Activated CD4-positive, alpha-beta T cell treated with anti-CD3 and anti-CD28 coated beads for 36 hours (primary cell): ENCODE measurements at regions of chr6 and their contacts with region 1.

Region 1: DNA sequence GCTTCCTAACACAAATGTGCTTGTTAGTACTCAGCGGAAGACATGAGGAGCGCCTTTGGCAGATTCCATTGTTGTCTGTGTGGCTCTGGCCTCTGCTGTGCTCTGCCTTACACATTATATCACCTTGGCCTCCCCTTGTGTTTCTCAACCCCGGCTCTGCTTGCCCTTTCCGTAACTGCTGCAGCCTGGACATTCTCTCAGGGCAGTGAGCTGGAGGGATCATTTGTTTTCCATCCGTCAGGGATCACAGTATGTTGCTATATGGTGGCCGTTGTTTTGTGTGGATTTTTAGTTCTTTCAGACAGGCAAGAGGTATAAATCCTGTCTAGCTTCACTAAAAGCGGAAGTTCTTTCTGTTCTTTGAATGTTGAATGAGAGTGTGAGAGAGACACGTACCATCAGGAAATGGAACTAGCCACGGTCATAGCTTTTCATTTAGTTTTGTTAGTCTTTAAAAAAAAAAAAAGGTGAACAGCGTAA is 175.1 kb downstream of the JARID2 start:
- DNase-seq: no peak
- ATAC-seq: peak; percentile 27
- H3K4me3 Mint-ChIP-seq: peak overlapping the region; percentile 53
- H3K27ac Mint-ChIP-seq: peak overlapping the region; percentile 81
- H3K4me1 Mint-ChIP-seq: peaks cover 70% of the 10 kb centered on the region
- H3K27me3 Mint-ChIP-seq: no peaks in the 10 kb centered on the region

Region 2: DNA sequence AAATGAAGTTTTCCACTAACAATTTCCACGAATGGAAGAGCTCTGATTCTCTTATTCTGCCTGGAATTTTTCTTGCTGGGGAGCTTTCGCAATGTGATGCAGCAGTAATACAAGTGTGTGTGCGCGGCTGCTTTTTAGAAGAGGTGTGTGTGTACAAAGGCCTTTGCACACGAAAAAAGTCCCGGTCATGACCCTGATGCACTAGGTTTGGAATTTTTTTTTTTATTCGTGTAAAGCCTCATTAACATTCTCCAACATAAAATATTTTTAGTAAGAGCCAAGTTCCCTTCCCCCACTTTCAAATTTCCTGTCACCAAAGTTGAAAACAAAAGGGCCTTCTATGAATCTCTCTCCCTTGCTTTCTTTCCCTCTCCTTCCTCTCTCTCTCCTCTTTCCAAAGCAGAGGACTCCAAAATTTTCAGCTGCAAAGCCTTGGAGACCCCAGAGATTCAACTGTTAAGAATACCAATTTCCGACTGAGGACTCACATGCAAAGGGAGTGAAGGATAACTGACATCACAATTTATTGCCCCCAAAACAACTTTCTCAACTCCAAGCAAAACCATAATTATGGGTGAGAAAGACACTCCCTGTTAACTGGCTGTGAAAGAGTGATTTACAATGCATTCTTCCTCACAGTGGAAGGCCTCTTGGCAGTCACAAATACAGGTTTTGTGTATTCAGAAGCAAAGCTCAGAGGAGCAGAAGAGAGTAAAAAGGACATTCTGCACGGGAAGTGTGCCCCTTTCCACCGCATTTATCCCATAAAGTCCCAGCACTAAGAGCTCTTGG is 596.3 kb before region 1 on chr6:
- CTCF ChIA-PET with region 1: no interaction called
- POLR2A ChIA-PET with region 1: no interaction called
- intact Hi-C with region 1: loop called in 1 of 2 experiments (anchors 5 kb)
- DNase-seq: no peak
- ATAC-seq: no peak
- H3K4me3 Mint-ChIP-seq: no peak overlapping the region
- H3K27ac Mint-ChIP-seq: no peak overlapping the region
- H3K4me1 Mint-ChIP-seq: peaks cover 24% of the 10 kb centered on the region
- H3K27me3 Mint-ChIP-seq: no peaks in the 10 kb centered on the region

Region 3: GRCh38 chr6:15410752-15411151 is 10.2 kb before region 1 on chr6:
- CTCF ChIA-PET with region 1: interaction called, 10 read pairs
- POLR2A ChIA-PET with region 1: no interaction called
- intact Hi-C with region 1: no loop called
- DNase-seq: no peak
- ATAC-seq: no peak
- H3K4me3 Mint-ChIP-seq: peak overlapping the region; percentile 8
- H3K27ac Mint-ChIP-seq: peak overlapping the region; percentile 83
- H3K4me1 Mint-ChIP-seq: peaks cover 73% of the 10 kb centered on the region
- H3K27me3 Mint-ChIP-seq: no peaks in the 10 kb centered on the region

Region 4: GRCh38 chr6:15431762-15432483 is 10.9 kb after region 1 on chr6:
- CTCF ChIA-PET with region 1: interaction called, 27 read pairs
- POLR2A ChIA-PET with region 1: no interaction called
- intact Hi-C with region 1: no loop called
- DNase-seq: no peak
- ATAC-seq: no peak
- H3K4me3 Mint-ChIP-seq: no peak overlapping the region
- H3K27ac Mint-ChIP-seq: no peak overlapping the region
- H3K4me1 Mint-ChIP-seq: peaks cover 89% of the 10 kb centered on the region
- H3K27me3 Mint-ChIP-seq: no peaks in the 10 kb centered on the region

Region 5: DNA sequence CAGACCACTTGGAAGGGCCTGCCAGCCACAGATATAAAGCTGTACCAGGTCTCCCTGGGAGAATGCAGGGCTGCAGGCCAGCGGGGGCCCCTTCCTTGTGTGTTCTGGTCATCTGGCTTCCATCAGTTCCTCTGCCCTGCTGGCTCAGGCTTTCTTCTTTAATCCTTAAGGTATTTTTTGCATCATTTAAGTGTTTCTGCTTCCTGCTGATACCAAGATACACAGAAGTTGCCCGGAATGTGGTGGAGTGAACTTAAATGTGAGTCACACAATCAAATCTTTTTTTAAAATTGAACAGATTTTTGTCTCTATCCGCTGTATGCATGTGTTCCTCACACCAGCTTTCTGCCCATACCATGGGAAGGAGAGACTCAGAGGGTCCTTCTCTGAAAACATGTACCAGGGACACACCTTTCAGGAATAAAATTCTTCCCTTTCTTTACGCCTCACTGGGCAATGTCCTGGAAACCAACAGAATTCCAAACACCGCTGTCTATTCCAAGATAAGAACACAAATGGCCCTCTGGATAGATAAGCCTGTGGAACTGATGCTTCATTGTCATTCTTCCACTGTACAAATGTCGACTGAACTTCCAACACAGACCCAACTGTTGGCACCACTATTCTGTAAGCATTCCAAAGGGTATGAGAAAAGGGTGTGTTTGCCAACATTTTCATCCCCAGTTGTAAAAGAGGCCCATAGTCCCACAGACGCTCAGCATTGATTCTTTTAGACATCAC is 501.7 kb after region 1 on chr6:
- CTCF ChIA-PET with region 1: no interaction called
- POLR2A ChIA-PET with region 1: no interaction called
- intact Hi-C with region 1: no loop called
- DNase-seq: no peak
- ATAC-seq: no peak
- H3K4me3 Mint-ChIP-seq: no peak overlapping the region
- H3K27ac Mint-ChIP-seq: no peak overlapping the region
- H3K4me1 Mint-ChIP-seq: no peaks in the 10 kb centered on the region
- H3K27me3 Mint-ChIP-seq: peaks cover 2% of the 10 kb centered on the region